Posterior vena cava (tissue), 2 donors: ENCODE measurements at regions of chr1 and their contacts with region 1.

Region 1: DNA sequence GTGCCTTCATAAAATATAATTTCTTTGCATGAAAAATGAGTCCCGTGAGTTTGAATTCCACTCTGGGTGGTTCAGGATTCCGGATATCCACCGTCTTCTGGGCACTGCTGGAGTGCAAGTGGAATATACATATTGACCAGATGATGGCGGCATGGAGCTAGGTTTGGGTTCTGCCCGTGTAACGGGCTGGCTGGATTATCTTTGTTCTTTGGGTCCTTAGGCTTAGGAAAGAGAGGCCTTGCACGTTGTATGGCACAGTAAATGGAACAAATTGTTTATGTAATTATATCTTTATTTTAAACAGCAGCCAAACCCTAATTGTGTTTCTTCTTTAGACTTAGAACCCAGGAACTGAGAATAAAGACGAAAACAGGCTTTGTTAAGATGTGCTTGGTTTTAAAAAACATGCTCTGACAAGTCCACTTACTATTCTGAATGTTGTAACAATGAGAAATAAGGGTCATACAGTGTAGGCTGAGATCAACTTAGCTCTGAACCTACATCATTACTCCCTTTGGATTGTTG is 13.5 kb upstream of the ACBD6 start:
- DNase-seq: no peak

Region 2: GRCh38 chr1:180837020-180837419 is 321.1 kb after region 1 on chr1:
- intact Hi-C with region 1: no loop called
- DNase-seq: no peak

Region 3: DNA sequence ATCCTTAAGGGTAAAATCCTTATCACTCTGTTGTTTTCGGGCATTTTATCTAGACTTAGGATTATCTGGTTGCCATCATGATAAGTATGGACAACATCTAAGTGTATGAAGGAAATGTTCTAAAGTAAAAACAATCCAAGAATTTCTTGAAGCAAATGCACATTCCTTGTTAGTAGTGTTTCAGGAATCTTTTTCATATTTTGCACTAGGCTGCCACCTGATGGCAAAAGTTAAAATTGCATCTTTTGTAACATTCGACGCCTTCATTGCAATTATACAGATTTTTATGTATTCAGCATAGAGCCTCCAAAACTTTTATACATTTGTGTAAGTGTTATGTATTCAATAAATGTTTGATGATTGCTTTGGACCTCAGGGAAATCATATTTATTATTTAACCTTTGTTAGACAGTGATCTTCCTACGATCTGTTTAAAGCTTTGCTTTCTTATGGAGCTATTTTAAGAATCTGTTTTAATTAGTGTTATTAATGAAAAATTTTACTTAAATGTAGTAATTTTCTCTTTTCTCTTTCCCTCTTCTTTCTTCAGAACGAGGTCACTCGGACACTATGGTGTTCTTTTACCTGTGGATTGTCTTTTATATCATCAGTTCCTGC is 347.3 kb after region 1 on chr1:
- intact Hi-C with region 1: loop called in 1 of 2 experiments (anchors 5 kb)
- DNase-seq: no peak

Region 4: GRCh38 chr1:181166377-181167196 is 650.7 kb after region 1 on chr1:
- intact Hi-C with region 1: loop called in 1 of 2 experiments (anchors 10 kb)
- DNase-seq: no peak